MCF 10A (cell line): ENCODE measurements at regions of chr7 and their contacts with region 1.

Region 1: GRCh38 chr7:128398016-128398840 is 11.6 kb downstream of the IMPDH1 start:
- DNase-seq: peak; percentile 52
- H3K4me3 Mint-ChIP-seq: no peak overlapping the region
- H3K27ac Mint-ChIP-seq: no peak overlapping the region
- H3K4me1 Mint-ChIP-seq: peaks cover under 1% of the 10 kb centered on the region
- H3K27me3 Mint-ChIP-seq: no peaks in the 10 kb centered on the region
- CTCF ChIP-seq: peak; percentile 79

Region 2: GRCh38 chr7:127651556-127652332 is 746.5 kb before region 1 on chr7 and contains the start of gene SND1:
- CTCF ChIA-PET with region 1: no interaction called
- POLR2A ChIA-PET with region 1: no interaction called
- intact Hi-C with region 1: no loop called
- DNase-seq: peak; percentile 99
- H3K4me3 Mint-ChIP-seq: no peak within 1 kb of the TSS
- H3K27ac Mint-ChIP-seq: no peak within 1 kb of the TSS
- H3K4me1 Mint-ChIP-seq: peaks cover 27% of the 10 kb centered on the region
- H3K27me3 Mint-ChIP-seq: no peaks in the 10 kb centered on the region
- CTCF ChIP-seq: no peak
- total RNA-seq, gene SND1: 291 and 297 TPM in 2 replicates

Region 3: DNA sequence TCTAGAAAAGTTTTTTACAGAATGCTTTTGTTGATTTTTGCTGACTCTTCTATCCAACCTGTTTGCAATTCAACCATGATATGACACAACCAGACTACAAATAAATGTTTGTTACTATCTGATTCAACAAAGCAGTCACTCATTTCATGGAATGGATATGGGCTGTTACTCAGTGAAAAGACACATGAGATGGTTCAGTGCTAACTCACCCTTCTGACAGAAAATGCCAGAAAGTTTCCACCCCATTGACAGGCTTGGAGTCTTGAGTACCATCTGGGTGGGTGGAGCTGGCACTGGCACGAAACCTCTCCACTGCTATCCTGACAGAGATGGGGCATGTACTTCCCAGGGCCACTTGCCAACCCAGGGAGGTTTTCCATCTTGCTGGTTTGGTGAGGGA is 94.0 kb before region 1 on chr7:
- CTCF ChIA-PET with region 1: no interaction called
- POLR2A ChIA-PET with region 1: no interaction called
- intact Hi-C with region 1: no loop called
- DNase-seq: no peak
- H3K4me3 Mint-ChIP-seq: no peak overlapping the region
- H3K27ac Mint-ChIP-seq: no peak overlapping the region
- H3K4me1 Mint-ChIP-seq: no peaks in the 10 kb centered on the region
- H3K27me3 Mint-ChIP-seq: no peaks in the 10 kb centered on the region
- CTCF ChIP-seq: no peak

Region 4: GRCh38 chr7:128358233-128358632 is 40.0 kb before region 1 on chr7:
- CTCF ChIA-PET with region 1: interaction called, 11 read pairs
- POLR2A ChIA-PET with region 1: no interaction called
- intact Hi-C with region 1: no loop called
- DNase-seq: no peak
- H3K4me3 Mint-ChIP-seq: no peak overlapping the region
- H3K27ac Mint-ChIP-seq: no peak overlapping the region
- H3K4me1 Mint-ChIP-seq: peaks cover 6% of the 10 kb centered on the region
- H3K27me3 Mint-ChIP-seq: peaks cover 22% of the 10 kb centered on the region
- CTCF ChIP-seq: no peak

Region 5: DNA sequence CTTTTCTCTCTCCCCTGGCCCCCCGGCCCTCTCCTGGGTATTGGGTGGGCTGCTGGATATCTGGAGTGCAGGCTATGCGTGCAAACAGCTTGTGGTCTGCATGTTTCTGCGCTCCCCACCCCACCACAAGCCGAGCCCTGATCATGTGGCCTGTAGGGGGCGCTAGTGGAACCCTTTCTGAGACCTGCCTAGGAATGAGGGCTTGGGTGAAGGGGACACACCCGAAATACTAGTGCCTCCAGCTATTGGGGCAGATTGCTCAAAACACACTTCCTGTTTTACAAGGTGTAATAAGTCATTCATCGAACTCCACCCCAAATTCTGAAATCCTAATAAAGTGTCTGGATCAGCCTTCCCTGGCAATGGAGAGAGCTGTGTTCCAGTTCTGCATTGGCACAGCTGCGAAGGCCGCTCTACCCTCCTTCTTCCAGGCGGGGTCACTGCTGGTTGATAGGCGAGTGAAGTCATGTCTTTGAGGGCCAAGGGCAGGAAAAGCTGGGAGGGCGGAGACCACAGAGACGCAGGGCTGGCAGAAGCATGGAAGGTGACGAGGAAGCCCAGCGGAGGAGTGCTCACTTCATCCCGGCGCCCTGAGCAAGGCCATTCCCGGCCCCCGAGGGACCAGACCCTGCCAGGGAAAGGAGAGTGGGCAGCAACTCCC is 16.9 kb before region 1 on chr7:
- CTCF ChIA-PET with region 1: interaction called, 67 read pairs
- POLR2A ChIA-PET with region 1: interaction called, 3 read pairs
- intact Hi-C with region 1: no loop called
- DNase-seq: peak; percentile 81
- H3K4me3 Mint-ChIP-seq: no peak overlapping the region
- H3K27ac Mint-ChIP-seq: no peak overlapping the region
- H3K4me1 Mint-ChIP-seq: peaks cover 11% of the 10 kb centered on the region
- H3K27me3 Mint-ChIP-seq: no peaks in the 10 kb centered on the region
- CTCF ChIP-seq: peak; percentile 75

Region 6: DNA sequence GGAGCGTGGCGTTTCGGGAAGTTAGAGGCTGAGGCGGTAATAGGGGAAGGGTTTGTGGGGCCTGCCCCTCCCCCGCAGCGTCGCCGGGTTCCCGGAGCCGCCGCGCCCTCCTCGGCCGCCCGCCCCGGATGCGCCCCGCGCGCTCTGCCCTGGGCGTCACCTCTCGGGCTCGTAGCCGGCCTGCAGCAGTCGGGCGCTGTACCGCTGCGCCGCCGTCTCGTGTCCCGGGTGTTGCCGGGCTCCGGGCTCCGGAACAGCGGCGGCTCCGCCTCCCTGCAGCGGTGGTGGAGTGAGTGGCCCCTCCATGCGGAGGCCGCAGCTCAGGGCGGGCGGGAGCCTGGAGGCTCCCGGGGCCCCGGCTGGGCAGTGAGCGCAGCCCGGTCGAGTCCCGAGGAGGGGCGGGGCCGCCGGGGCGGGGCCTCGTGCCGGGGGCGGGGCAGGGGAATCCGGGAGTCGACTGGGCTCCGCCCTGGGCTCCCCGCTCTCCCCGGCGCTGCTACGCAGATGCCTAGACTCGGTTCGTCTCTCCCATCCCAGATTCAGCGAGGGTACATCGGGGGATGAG is 11.4 kb after region 1 on chr7 and contains the start of gene IMPDH1:
- CTCF ChIA-PET with region 1: interaction called, 20 read pairs
- POLR2A ChIA-PET with region 1: interaction called, 6 read pairs
- intact Hi-C with region 1: no loop called
- DNase-seq: peak; percentile 78
- H3K4me3 Mint-ChIP-seq: peak within 1 kb of the TSS; percentile 86
- H3K27ac Mint-ChIP-seq: peak within 1 kb of the TSS; percentile 51
- H3K4me1 Mint-ChIP-seq: peaks cover 5% of the 10 kb centered on the region
- H3K27me3 Mint-ChIP-seq: no peaks in the 10 kb centered on the region
- CTCF ChIP-seq: no peak
- total RNA-seq, gene IMPDH1: 66.4 and 74.0 TPM in 2 replicates

Region 7: DNA sequence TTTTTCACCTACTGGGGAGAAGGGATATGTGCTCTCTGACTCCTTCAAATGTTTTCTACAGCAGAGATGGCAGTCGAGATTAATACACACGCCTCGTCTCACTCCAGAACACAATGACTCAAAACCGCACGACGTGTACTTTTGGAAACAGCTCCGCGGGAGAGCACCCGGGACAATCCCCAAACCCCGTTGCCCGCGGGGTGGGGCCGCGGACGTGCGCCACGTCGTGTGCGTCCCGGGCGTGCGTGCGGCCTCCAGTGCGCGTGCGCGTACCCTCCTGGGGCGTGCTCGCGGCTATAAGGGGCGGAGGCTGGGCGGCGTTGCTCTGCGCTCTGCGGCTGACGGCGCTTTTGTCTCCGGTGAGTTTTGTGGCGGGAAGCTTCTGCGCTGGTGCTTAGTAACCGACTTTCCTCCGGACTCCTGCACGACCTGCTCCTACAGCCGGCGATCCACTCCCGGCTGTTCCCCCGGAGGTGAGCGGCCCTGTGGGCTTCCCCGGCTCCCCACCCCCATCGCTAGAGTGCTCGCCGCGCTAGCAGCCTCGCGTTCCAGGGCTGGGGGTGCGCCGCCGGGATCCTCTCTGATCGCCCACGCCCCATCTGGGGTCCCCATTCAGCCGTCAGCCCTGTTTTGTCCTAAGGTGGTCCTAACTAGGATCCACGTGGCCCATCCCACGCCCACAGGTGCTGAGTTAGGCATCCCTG is 57.5 kb after region 1 on chr7 and contains the start of gene HILPDA:
- CTCF ChIA-PET with region 1: interaction called, 42 read pairs
- POLR2A ChIA-PET with region 1: no interaction called
- intact Hi-C with region 1: loop called (anchors 1 kb)
- DNase-seq: peak; percentile 94
- H3K4me3 Mint-ChIP-seq: peak within 1 kb of the TSS; percentile 95
- H3K27ac Mint-ChIP-seq: peak within 1 kb of the TSS; percentile 88
- H3K4me1 Mint-ChIP-seq: peaks cover 14% of the 10 kb centered on the region
- H3K27me3 Mint-ChIP-seq: peaks cover 25% of the 10 kb centered on the region
- CTCF ChIP-seq: no peak
- total RNA-seq, gene HILPDA: 6.2 and 8.3 TPM in 2 replicates